ENCODE measurements at regions of chr11 and their contacts with region 1.

Region 1: GRCh38 chr11:125062931-125063428 is at the start of gene SLC37A2:
- DNase-seq: peak; percentile 73
- ATAC-seq: peak; percentile 90
- H3K4me3 Mint-ChIP-seq: peak within 1 kb of the TSS; percentile 77
- H3K27ac Mint-ChIP-seq: no peak within 1 kb of the TSS
- H3K4me1 Mint-ChIP-seq: peaks cover 8% of the 10 kb centered on the region; the same call in 1 of the 2 replicates
- H3K27me3 Mint-ChIP-seq: peaks cover 59% of the 10 kb centered on the region
- CTCF ChIP-seq: no peak
- total RNA-seq, gene SLC37A2: 1.3 to 2.2 TPM (median 2.1 TPM) in 3 replicates

Region 2: DNA sequence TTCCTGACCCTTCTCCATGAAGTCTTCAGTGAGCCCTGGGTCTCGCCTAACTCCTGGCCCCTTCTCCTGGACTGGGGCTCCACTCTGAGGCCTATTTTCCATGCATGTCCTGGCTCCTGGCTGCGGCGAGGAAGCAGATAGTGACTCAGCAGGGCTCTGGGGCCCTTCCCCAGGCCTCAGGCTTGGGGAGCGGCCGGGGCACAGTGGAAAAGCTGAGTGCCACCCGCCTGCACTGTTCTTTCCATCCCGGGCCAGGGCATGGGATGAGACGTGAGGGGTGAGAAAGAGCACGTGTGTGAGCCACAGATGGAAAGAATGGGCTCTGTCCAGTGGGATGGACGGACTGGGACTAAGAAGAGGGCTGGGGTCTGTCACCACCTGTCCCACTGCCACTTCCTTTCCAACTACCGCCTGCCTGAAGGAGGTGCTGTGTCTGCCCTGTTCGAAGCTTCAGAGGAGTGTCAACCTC is 12.9 kb after region 1 on chr11:
- CTCF ChIA-PET with region 1: interaction called, 11 read pairs
- POLR2A ChIA-PET with region 1: no interaction called
- DNase-seq: no peak
- ATAC-seq: peak; percentile 51
- H3K4me3 Mint-ChIP-seq: no peak overlapping the region
- H3K27ac Mint-ChIP-seq: no peak overlapping the region
- H3K4me1 Mint-ChIP-seq: peaks cover 6% of the 10 kb centered on the region
- H3K27me3 Mint-ChIP-seq: no peaks in the 10 kb centered on the region; the same call in 1 of the 2 replicates
- CTCF ChIP-seq: no peak